ENCODE measurements at regions of chr3 and their contacts with region 1.

Region 1: DNA sequence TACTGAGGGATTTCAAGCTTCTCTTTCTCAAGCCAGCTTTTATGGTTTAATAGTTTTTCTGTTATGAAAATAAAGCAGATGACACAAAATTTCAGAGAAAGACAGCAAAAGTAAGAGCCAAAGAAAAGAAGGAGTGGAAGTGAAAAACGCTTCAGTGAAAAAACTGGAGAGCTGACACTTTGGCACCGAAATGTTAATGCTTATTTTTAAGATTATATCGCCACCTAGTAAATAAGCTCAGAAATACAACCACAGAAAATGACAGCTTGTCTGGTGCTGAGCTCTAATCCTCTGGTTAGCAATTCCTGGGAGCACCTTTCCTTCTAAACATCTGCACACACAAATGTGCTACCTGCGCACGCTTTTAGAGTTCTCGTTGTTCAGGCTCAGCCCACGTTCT is 101.6 kb downstream of the ZPLD1 start:
- DNase-seq: peak; percentile 30
- H3K4me3 ChIP-seq: no peak overlapping the region
- H3K27ac ChIP-seq: no peak overlapping the region
- H3K4me1 ChIP-seq: no peaks in the 10 kb centered on the region
- H3K27me3 ChIP-seq: peaks cover 1 to 13% of the 10 kb centered on the region in 2 experiments
- CTCF ChIP-seq: peak in 1 of 2 donors; percentile 9
- POLR2A ChIP-seq: no peak

Region 2: GRCh38 chr3:101695779-101696372 is 840.6 kb before region 1 on chr3:
- CTCF ChIA-PET with region 1: interaction called, 3 read pairs
- POLR2A ChIA-PET with region 1: no interaction called
- dilution Hi-C with region 1: no loop called
- intact Hi-C with region 1: loop called (anchors 5 kb)
- DNase-seq: peak; percentile 68
- H3K4me3 ChIP-seq: no peak overlapping the region
- H3K27ac ChIP-seq: no peak overlapping the region
- H3K4me1 ChIP-seq: no peaks in the 10 kb centered on the region
- H3K27me3 ChIP-seq: no peaks in the 10 kb centered on the region
- CTCF ChIP-seq: peak; percentile 50 to 52
- POLR2A ChIP-seq: no peak

Region 3: DNA sequence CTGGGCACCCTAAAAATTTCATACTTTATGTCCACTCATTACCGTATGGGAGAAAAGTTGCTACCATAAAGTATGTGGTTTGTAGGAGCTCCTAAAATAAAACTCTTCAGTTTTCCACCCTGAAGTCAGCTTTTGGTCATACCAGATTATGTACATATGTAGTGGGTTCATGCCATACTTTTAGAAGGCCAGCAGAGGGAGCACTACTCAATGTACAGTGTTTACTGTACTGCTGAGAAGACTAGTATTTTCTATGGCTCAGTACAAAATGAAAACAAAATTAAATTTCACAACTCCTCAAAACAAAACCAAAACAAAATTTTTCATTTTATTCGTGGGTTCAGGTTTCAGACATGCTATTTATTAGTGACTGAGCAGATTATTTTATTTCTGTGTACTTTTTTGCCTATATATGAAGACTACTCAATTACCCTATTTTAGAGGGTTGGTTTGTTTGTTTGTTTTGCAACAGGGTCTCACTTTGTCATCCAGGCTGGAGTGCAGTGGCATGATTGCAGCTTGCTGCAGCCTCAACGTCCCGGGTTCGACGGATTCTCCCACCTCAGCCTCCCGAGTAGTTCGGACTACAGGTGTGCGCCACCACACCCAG is 733.2 kb before region 1 on chr3:
- CTCF ChIA-PET with region 1: interaction called, 34 read pairs
- POLR2A ChIA-PET with region 1: no interaction called
- dilution Hi-C with region 1: no loop called
- intact Hi-C with region 1: no loop called
- DNase-seq: peak; percentile 55
- H3K4me3 ChIP-seq: no peak overlapping the region
- H3K27ac ChIP-seq: no peak overlapping the region
- H3K4me1 ChIP-seq: no peaks in the 10 kb centered on the region
- H3K27me3 ChIP-seq: no peaks in the 10 kb centered on the region
- CTCF ChIP-seq: peak; percentile 61 to 66
- POLR2A ChIP-seq: no peak

Region 4: GRCh38 chr3:101809178-101810021 is 727.1 kb before region 1 on chr3:
- CTCF ChIA-PET with region 1: interaction called, 34 read pairs
- POLR2A ChIA-PET with region 1: no interaction called
- dilution Hi-C with region 1: no loop called
- intact Hi-C with region 1: loop called (anchors 1 kb)
- DNase-seq: peak; percentile 69
- H3K4me3 ChIP-seq: no peak overlapping the region
- H3K27ac ChIP-seq: peak overlapping the region; percentile 60
- H3K4me1 ChIP-seq: peaks cover 14% of the 10 kb centered on the region
- H3K27me3 ChIP-seq: no peaks in the 10 kb centered on the region
- CTCF ChIP-seq: peak; percentile 51 to 59
- POLR2A ChIP-seq: no peak

Region 5: DNA sequence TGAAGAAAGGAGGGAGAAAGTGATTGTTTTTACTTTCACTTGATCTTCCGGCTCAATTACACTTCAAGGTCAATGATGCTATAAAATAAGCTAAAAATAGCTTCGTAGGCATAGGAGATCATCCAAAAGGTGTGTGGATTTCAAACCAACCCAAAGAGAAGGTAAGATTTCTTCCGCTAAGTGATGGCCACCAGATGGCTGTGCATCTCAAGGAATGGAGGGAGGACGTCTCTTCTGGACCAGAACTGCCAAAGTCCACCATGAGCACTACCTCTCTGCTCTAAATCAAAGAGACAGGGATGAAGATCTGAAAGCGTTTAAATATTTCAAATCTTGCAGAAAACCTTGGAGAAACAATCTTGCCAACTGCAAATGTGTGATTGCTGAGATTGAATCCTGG is 300.8 kb before region 1 on chr3:
- CTCF ChIA-PET with region 1: interaction called, 12 read pairs
- POLR2A ChIA-PET with region 1: no interaction called
- dilution Hi-C with region 1: no loop called
- intact Hi-C with region 1: no loop called
- DNase-seq: no peak
- H3K4me3 ChIP-seq: no peak overlapping the region
- H3K27ac ChIP-seq: no peak overlapping the region
- H3K4me1 ChIP-seq: no peaks in the 10 kb centered on the region
- H3K27me3 ChIP-seq: peaks cover 29 to 57% of the 10 kb centered on the region in 2 experiments
- CTCF ChIP-seq: no peak
- POLR2A ChIP-seq: no peak

Region 6: DNA sequence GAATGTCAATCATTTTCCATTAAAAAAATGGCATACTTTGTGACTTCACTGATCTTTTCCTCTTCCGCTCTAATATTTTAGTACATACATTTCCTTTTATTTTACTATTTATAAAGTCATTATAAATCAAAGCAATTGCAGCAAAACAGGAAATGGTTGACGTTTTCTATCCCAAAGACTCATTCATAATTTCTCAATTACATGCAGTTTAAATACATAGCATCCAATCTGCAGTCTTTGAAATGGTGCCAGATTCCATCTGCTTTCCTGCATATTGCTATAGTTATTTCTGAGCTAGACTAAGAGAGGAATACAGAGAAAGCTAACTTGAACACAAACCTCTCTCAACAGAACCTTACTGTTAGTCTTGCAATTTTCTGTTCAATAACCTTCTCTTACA is 78.1 kb after region 1 on chr3:
- CTCF ChIA-PET with region 1: no interaction called
- POLR2A ChIA-PET with region 1: no interaction called
- dilution Hi-C with region 1: no loop called
- intact Hi-C with region 1: no loop called
- DNase-seq: no peak
- H3K4me3 ChIP-seq: no peak overlapping the region
- H3K27ac ChIP-seq: no peak overlapping the region
- H3K4me1 ChIP-seq: no peaks in the 10 kb centered on the region
- H3K27me3 ChIP-seq: no peaks in the 10 kb centered on the region
- CTCF ChIP-seq: no peak
- POLR2A ChIP-seq: no peak